PC-3 (cell line): ENCODE measurements at regions of chr2 and their contacts with region 1.

Region 1: DNA sequence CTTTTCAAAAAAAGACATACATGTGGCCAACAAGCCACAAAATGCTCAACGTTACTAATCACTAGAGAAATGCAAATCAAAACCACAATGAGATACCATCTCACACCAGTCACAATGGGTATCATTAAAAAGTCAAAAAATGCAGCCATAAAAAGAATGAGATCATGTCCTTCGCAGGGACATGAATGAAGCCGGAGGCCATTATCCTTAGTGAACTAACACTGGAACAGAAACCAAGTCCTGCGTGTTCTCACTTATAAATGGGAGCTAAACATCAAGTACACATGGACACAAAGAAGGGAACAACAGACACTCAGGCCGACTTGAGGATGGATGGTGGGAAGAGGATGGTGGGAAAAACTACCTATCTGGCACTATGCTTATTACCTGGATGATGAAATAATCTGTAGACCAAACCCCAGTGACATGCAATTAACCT is 17.8 kb upstream of the ATL2 start:
- DNase-seq: peak; percentile 86
- ATAC-seq: peak; percentile 52
- H3K4me3 ChIP-seq: no peak overlapping the region
- H3K27ac ChIP-seq: peak overlapping the region; percentile 90
- H3K4me1 ChIP-seq: peaks cover 27% of the 10 kb centered on the region
- H3K27me3 ChIP-seq: no peaks in the 10 kb centered on the region
- CTCF ChIP-seq: no peak

Region 2: GRCh38 chr2:38406597-38407110 is 11.7 kb after region 1 on chr2:
- CTCF ChIA-PET with region 1: no interaction called
- POLR2A ChIA-PET with region 1: interaction called, 16 read pairs
- intact Hi-C with region 1: no loop called
- DNase-seq: no peak
- ATAC-seq: no peak
- H3K4me3 ChIP-seq: no peak overlapping the region
- H3K27ac ChIP-seq: no peak overlapping the region
- H3K4me1 ChIP-seq: no peaks in the 10 kb centered on the region
- H3K27me3 ChIP-seq: no peaks in the 10 kb centered on the region
- CTCF ChIP-seq: no peak

Region 3: DNA sequence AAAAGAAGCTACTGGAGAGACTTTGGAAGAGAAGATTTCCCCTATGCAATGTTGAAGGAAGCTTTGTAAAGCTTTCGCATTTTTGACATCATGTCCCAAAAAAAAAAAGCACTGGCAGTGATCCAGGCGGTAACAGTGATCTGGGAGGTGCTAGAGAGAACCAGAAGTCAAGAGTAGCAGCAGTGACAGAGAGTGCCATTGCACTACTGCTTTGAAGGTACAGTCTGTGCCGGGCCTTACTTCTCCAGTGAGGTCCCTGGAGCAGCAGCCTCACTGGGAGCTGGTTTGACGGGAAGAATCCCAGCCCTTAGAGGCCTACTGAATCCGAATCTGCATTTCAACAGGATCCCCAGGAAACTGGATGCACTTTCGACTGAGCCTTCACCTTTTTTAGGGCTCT is 33.0 kb after region 1 on chr2:
- CTCF ChIA-PET with region 1: no interaction called
- POLR2A ChIA-PET with region 1: no interaction called
- intact Hi-C with region 1: loop called (anchors 2 kb)
- DNase-seq: no peak
- ATAC-seq: no peak
- H3K4me3 ChIP-seq: no peak overlapping the region
- H3K27ac ChIP-seq: peak overlapping the region; percentile 55; the same call in 1 of the 2 replicates
- H3K4me1 ChIP-seq: peaks cover 27% of the 10 kb centered on the region
- H3K27me3 ChIP-seq: no peaks in the 10 kb centered on the region
- CTCF ChIP-seq: no peak